Transverse colon (tissue), 4 donors: ENCODE measurements at regions of chr4 and their contacts with region 1.

Region 1: GRCh38 chr4:3037957-3038461 is 36.3 kb downstream of the HTT-AS start:
- DNase-seq: no peak
- H3K4me3 ChIP-seq: peak overlapping the region in 1 of 4 donors; percentile 31
- H3K27ac ChIP-seq: no peak overlapping the region
- H3K4me1 ChIP-seq: peaks cover 0 to 31% (median 13%) of the 10 kb centered on the region in 4 donors
- H3K27me3 ChIP-seq: no peaks in the 10 kb centered on the region
- CTCF ChIP-seq: no peak
- EP300 ChIP-seq: no peak
- POLR2A ChIP-seq: no peak

Region 2: DNA sequence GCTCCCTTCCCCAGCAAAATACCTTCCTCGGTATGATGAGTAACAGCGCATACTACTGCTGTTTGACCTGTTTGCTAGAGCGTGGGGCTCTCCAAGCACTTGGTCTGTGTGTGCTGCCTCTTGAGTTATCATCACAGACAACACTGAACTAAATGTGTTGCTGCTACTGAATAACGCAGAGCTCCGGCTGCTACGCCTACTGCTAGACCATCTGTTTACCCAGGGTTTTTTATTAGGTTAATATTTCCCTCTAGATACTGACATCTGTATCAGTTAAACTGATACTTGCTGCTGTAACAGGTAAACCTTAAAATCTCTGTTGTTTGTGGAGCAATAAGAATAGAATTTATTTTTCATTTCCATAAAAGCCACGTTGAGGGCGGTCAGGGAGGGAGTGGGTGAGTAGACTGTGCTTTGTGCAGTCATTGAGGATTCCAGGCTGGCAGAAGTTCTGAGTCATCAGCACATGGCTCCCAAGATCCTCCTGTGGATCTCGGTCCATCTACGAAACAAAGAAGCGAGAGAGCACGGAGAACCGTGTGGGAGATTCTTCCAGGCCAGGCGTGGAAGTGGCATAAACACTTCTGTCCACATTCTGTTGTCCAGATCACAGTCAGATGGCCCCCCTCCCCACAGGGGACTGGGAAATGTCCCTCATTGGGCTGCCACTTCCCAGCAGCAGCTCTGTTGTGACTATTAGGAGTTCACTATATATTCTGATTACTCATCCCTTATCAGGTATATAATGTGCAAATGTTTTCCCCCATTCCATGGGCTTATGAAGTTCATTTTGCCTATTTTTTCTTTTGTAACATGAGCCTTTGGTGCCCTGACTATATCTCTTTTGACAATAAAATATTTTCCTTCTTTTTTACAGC is 60.6 kb before region 1 on chr4:
- in situ Hi-C with region 1: no loop called
- intact Hi-C with region 1: loop called (anchors 10 kb)
- DNase-seq: no peak
- H3K4me3 ChIP-seq: no peak overlapping the region
- H3K27ac ChIP-seq: peak overlapping the region in 1 of 4 donors; percentile 25
- H3K4me1 ChIP-seq: no peaks in the 10 kb centered on the region
- H3K27me3 ChIP-seq: no peaks in the 10 kb centered on the region
- CTCF ChIP-seq: no peak
- EP300 ChIP-seq: no peak
- POLR2A ChIP-seq: no peak

Region 3: GRCh38 chr4:3179126-3179706 is 141.2 kb after region 1 on chr4:
- in situ Hi-C with region 1: no loop called
- intact Hi-C with region 1: no loop called
- DNase-seq: no peak
- H3K4me3 ChIP-seq: no peak overlapping the region
- H3K27ac ChIP-seq: no peak overlapping the region
- H3K4me1 ChIP-seq: peaks cover 0 to 9% (median 2%) of the 10 kb centered on the region in 4 donors
- H3K27me3 ChIP-seq: no peaks in the 10 kb centered on the region
- CTCF ChIP-seq: no peak
- EP300 ChIP-seq: no peak
- POLR2A ChIP-seq: no peak